ENCODE measurements at regions of chr9 and their contacts with region 1.

Region 1: DNA sequence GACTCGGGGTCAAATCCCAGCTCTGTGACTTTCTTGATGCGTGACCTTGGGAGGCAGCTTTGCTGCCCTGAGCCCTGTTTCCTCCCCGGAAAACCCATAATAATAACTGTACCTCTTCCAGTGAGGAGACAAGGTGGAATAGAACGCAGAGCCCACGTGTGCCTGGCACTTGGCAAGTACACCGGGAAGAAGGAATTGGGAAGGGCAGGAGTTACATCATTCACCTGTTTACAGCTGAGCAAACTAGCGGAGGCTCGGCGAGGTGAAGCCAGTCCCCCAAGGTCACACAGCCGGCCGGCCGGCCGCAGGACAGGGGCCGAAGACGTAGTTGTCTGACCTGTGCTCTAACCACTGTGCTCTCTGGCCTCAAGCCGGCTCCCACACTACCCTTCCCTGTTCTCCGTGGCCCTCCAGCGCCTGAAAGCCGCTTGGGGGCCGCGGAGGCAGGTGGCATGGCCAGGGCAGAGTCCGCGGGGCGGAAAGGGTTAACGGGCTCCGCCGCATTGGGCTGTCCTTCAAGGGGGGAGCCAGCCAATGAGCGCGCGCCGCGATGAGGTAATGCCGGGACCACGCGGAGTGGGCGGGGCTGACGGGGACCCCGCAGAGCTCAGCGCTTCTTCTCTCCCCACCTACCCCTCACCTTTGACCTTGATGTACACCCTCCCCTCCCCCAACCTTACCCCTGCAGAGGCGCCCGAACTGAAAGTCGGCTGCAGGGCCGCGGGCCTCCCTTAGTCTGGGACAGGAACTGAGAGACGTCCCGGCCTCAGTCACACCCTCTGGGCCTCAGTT is 125.2 kb downstream of the C9orf50 start:
- DNase-seq: peak; percentile 87 to 92
- ATAC-seq: peak; percentile 74 to 76
- H3K4me3 ChIP-seq: peak overlapping the region; percentile 68 to 88 (median 73)
- H3K27ac ChIP-seq: peak overlapping the region; percentile 93 to 97 (median 94)
- H3K4me1 ChIP-seq: peaks cover 22 to 24% of the 10 kb centered on the region in 2 donors
- H3K27me3 ChIP-seq: no peaks in the 10 kb centered on the region
- CTCF ChIP-seq: no peak
- POLR2A ChIP-seq: no peak

Region 2: DNA sequence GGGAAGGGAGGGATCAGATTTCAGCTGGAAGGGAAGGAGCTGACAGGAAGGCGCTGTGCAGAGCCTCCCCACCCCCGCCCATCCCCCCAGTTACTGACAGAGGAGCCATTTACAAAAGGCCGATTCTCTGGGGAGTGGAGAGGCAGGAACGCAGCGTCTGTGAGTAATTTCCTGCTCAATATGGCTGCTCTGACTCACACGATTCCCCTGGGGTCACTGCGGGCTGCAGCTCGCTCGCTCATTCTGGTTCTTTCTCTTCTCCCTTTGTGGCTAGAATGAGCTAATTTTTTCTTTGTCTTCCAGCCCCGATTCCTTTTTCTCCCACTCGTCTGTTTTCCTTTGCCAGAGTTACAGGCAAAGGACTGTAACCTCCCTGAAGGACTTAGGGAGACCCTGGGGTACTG is 355.7 kb before region 1 on chr9:
- in situ Hi-C with region 1: loop called in 2 of 4 experiments (anchors 25 kb)
- intact Hi-C with region 1: no loop called
- DNase-seq: peak; percentile 96 to 97
- ATAC-seq: peak; percentile 82 to 86
- H3K4me3 ChIP-seq: peak overlapping the region; percentile 51 to 77 (median 56)
- H3K27ac ChIP-seq: peak overlapping the region; percentile 95 to 100 (median 98)
- H3K4me1 ChIP-seq: peaks cover 67 to 72% of the 10 kb centered on the region in 2 donors
- H3K27me3 ChIP-seq: no peaks in the 10 kb centered on the region
- CTCF ChIP-seq: no peak
- POLR2A ChIP-seq: peak; percentile 36 to 60

Region 3: GRCh38 chr9:129383561-129384416 is 111.9 kb before region 1 on chr9:
- in situ Hi-C with region 1: no loop called
- intact Hi-C with region 1: loop called (anchors 10 kb)
- DNase-seq: peak; percentile 57 to 72
- ATAC-seq: peak; percentile 85 to 89
- H3K4me3 ChIP-seq: peak overlapping the region; percentile 63 to 98 (median 71)
- H3K27ac ChIP-seq: peak overlapping the region; percentile 83 to 94 (median 88)
- H3K4me1 ChIP-seq: peaks cover 8 to 17% of the 10 kb centered on the region in 2 donors
- H3K27me3 ChIP-seq: no peaks in the 10 kb centered on the region
- CTCF ChIP-seq: peak in 2 of 5 experiments; percentile 5 to 7
- POLR2A ChIP-seq: peak in 1 of 2 donors; percentile 47

Region 4: GRCh38 chr9:129460323-129461261 is 35.1 kb before region 1 on chr9:
- in situ Hi-C with region 1: no loop called
- intact Hi-C with region 1: loop called (anchors 1 kb)
- DNase-seq: peak; percentile 92 to 94
- ATAC-seq: peak; percentile 93 to 94
- H3K4me3 ChIP-seq: peak overlapping the region; percentile 50 to 67 (median 54)
- H3K27ac ChIP-seq: peak overlapping the region; percentile 84 to 91 (median 85)
- H3K4me1 ChIP-seq: peaks cover 23 to 27% of the 10 kb centered on the region in 2 donors
- H3K27me3 ChIP-seq: no peaks in the 10 kb centered on the region
- CTCF ChIP-seq: peak in 2 of 5 experiments; percentile 34 to 59
- POLR2A ChIP-seq: peak; percentile 64 to 79

Region 5: DNA sequence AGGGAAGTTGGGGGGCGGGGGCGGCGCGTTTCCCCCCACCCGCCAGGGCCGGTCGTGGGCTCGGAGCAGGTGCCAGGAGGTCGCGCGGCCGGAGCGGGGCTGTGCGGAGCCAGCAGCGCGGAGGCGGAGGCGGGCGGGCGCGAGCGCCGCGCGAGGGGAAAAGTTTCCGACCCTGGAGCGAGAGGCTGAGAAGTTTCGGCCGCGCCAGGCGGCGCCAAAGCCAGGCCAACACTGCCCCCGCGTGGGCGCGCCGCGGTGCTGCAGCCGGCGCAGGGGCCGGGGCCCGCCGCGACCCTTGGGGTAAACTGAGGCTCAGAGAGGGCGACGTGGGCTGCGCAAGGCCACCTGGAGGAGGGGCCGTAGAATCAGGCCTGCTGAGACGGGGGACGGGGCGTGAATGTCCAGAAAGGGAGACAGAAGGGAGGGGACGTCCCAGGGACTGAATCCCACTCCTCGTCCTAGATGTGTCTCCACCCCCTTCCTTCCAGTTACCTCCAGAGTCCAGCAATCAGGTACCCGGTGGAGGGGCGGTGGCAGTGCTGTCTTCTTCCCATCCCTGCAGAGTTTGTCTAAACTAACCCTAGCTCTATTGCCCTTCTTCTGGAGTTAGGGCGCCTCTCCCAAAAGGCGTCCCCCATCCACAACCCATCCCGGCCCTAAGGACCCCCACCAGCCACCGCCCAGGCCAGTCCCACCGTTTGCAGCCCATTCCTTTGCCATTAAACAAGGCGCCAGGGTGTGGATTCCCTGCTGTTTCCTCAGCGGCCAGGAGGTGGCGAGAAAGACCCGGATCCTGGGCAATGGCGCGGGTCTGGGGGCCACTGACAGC is 115.0 kb after region 1 on chr9:
- in situ Hi-C with region 1: no loop called
- intact Hi-C with region 1: loop called (anchors 5 kb)
- DNase-seq: peak; percentile 45 to 60
- ATAC-seq: peak; percentile 72 to 80
- H3K4me3 ChIP-seq: peak overlapping the region; percentile 60 to 95 (median 72)
- H3K27ac ChIP-seq: peak overlapping the region; percentile 77 to 86 (median 82)
- H3K4me1 ChIP-seq: peaks cover 13 to 22% of the 10 kb centered on the region in 2 donors
- H3K27me3 ChIP-seq: no peaks in the 10 kb centered on the region
- CTCF ChIP-seq: peak; percentile 65 to 100 (median 99)
- POLR2A ChIP-seq: no peak

Measured in gastrocnemius medialis (tissue), 4 donors.